Tibial artery (tissue), 4 donors: ENCODE measurements at regions of chr16 and their contacts with region 1.

Region 1: GRCh38 chr16:9090960-9091866 is at the start of gene HAPSTR1:
- DNase-seq: peak; percentile 100
- H3K4me3 ChIP-seq: peak within 1 kb of the TSS; percentile 65 to 84
- H3K27ac ChIP-seq: peak within 1 kb of the TSS; percentile 98 to 99
- H3K4me1 ChIP-seq: peaks cover 0 to 40% (median 28%) of the 10 kb centered on the region in 4 donors
- H3K27me3 ChIP-seq: no peaks in the 10 kb centered on the region
- CTCF ChIP-seq: no peak

Region 2: DNA sequence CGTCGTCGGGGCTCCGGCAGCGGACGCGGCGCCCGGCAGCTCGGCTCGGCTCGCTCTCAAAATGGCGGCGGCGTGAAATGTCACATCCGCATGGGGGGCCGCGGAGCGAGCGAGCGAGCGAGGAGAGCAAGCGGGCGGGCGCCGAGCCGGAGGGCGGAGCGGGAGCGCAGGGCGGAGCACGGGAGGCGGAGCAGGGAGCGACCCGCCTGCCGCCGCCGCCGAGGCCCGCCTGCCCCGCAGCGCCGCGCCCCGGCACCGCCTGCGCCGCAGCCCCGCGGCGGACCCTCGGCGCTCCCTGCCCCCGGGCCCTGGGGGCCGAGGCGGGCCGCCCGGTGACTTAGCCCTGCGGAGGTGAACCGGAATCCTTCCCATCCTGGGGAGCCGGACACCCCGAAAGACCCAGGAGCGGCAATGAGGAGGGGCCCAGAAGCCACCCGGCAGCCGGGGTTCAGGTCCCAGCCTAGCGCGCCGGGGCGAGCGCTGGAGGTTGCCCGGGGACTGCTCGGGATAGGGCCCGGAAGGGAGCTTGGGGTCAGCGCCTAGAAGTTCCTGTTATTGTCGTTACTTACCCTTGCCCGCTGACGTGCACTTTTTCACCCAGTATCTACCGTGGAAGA is 127.3 kb before region 1 on chr16 and contains the start of gene USP7:
- intact Hi-C with region 1: loop called (anchors 5 kb)
- DNase-seq: peak; percentile 94 to 95
- H3K4me3 ChIP-seq: peak within 1 kb of the TSS; percentile 80 to 81
- H3K27ac ChIP-seq: peak within 1 kb of the TSS; percentile 80 to 86
- H3K4me1 ChIP-seq: peaks cover 0 to 42% (median 36%) of the 10 kb centered on the region in 4 donors
- H3K27me3 ChIP-seq: no peaks in the 10 kb centered on the region
- CTCF ChIP-seq: no peak

Region 3: DNA sequence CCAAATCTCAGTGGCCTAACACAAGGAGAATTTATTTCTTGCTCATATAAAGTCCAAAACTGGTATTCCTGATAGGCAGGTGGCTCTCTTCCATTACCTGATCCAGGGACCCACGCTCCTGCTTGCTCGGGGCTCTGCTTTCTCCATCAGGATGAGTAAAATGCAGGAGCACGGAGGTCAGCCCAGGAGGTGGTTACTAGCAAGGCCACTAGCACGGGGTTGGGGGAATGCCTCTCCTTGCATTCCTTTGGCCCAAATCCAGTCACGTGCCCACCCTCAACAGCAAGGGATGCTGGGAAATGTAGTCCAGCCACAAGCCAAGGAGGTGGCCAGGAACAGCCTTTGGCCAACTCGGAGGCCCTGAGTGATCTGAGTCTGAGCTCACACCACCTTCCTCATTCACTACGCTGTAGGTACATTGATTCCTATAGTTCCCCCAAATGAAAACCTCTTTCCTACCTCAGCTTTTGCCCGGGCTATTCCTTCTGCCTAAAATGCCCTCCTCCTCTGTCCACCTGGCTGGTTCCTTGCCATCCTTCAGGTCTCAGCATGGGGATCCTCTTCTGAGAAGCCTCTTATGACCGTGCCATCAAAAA is 38.1 kb before region 1 on chr16:
- intact Hi-C with region 1: loop called (anchors 2 kb)
- DNase-seq: peak in 1 of 2 donors; percentile 33
- H3K4me3 ChIP-seq: no peak overlapping the region
- H3K27ac ChIP-seq: no peak overlapping the region
- H3K4me1 ChIP-seq: peaks cover 0 to 8% (median 3%) of the 10 kb centered on the region in 4 donors
- H3K27me3 ChIP-seq: no peaks in the 10 kb centered on the region
- CTCF ChIP-seq: no peak

Region 4: DNA sequence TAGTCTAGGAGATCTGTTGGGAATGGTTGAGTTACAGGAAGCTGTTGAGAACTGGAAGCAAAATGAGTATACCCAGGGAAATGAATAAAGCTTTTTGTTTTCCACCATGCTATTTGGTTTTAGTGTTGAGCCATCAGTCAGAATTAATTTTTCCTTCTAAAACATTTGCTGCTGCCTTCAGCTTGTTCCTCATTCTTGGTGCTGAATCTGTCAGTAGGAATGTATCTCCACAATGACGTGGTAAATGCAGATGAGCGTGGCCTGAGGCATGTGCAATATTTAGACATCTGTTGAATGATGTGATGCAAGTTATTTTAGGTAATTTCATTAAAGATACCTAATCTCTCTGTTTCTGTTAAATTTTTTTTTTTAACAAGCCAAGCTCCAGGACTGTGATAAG is 11.2 kb after region 1 on chr16:
- intact Hi-C with region 1: no loop called
- DNase-seq: no peak
- H3K4me3 ChIP-seq: no peak overlapping the region
- H3K27ac ChIP-seq: peak overlapping the region in 1 of 2 donors; percentile 10
- H3K4me1 ChIP-seq: peaks cover 0 to 100% (median 79%) of the 10 kb centered on the region in 4 donors
- H3K27me3 ChIP-seq: no peaks in the 10 kb centered on the region
- CTCF ChIP-seq: no peak

Region 5: DNA sequence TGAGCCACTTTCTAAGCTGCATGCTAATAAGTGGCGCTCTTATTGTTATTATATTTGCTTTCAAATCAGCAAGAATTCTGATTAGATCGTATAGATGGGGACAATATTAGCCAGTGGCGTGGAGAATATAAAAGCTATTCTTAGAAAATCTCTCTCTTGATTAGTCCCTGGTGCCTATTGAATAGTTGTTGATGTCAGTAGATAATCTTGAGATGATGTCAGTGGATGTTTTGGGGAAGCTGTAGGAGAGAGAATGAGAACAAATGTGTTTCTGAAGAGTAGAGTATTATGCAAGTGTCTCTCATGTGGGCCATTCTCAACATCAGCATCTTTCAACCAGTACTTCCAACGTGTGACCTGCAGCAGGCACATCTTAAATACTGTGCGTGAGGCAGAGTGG is 645.3 kb after region 1 on chr16:
- intact Hi-C with region 1: no loop called
- DNase-seq: no peak
- H3K4me3 ChIP-seq: no peak overlapping the region
- H3K27ac ChIP-seq: no peak overlapping the region
- H3K4me1 ChIP-seq: peaks cover 0 to 5% (median 0%) of the 10 kb centered on the region in 4 donors
- H3K27me3 ChIP-seq: peaks cover 0 to 9% of the 10 kb centered on the region in 2 donors
- CTCF ChIP-seq: no peak